ENCODE measurements at regions of chr15 and their contacts with region 1.

Region 1: GRCh38 chr15:64162870-64163658 is at the start of gene PPIB:
- DNase-seq: peak; percentile 89 to 97 (median 94)
- ATAC-seq: peak; percentile 94 to 95
- H3K4me3 Mint-ChIP-seq: peak within 1 kb of the TSS; percentile 83 to 99 (median 89)
- H3K27ac Mint-ChIP-seq: peak within 1 kb of the TSS; percentile 90 to 99 (median 94)
- H3K4me1 Mint-ChIP-seq: peaks cover 21 to 49% (median 40%) of the 10 kb centered on the region in 4 donors
- H3K27me3 Mint-ChIP-seq: no peaks in the 10 kb centered on the region
- polyA plus RNA-seq, gene PPIB: 431 to 581 (median 521) TPM

Region 2: GRCh38 chr15:64093627-64094417 is 69.2 kb before region 1 on chr15 and contains the start of gene CIAO2A:
- POLR2A ChIA-PET with region 1: interaction called, 27 read pairs
- DNase-seq: peak; percentile 69 to 95 (median 88)
- ATAC-seq: peak; percentile 69 to 72
- H3K4me3 Mint-ChIP-seq: peak within 1 kb of the TSS; percentile 93 to 100 (median 97)
- H3K27ac Mint-ChIP-seq: peak within 1 kb of the TSS; percentile 94 to 100 (median 100)
- H3K4me1 Mint-ChIP-seq: peaks cover 42 to 89% (median 80%) of the 10 kb centered on the region in 4 donors
- H3K27me3 Mint-ChIP-seq: no peaks in the 10 kb centered on the region
- polyA plus RNA-seq, gene CIAO2A: 54.8 to 84.8 (median 64.9) TPM

Region 3: DNA sequence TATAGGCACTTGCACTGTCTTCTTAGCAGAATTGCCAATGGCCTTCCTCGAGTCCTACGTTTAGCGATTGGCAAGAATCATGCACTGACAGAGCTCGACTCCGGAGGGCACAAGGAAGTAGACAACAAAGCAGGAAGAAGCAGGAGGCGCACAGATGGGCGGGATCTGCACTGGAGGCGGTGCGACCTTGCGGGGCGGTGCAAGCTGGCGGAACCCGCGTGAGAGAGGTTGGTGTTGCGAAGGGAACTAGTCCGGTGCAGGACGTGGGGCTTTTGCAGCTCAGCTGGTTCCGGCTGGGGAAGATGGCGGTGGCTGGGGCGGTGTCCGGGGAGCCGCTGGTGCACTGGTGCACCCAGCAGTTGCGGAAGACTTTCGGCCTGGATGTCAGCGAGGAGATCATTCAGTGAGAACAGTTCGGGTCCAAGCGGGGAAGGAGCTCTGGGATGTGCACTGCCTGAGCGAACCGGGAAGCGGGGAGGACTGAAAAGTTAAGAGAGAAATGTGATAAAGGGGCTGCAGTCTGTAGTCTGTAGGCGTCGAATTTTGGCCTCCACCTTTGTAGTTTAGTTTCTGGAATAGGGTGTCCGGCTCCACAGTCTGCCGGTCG is 224.6 kb after region 1 on chr15 and contains the start of gene TRIP4:
- POLR2A ChIA-PET with region 1: interaction called, 32 read pairs
- DNase-seq: peak; percentile 88 to 97 (median 96)
- ATAC-seq: peak; percentile 98 to 99
- H3K4me3 Mint-ChIP-seq: peak within 1 kb of the TSS; percentile 89 to 100 (median 99)
- H3K27ac Mint-ChIP-seq: peak within 1 kb of the TSS; percentile 93 to 97 (median 95)
- H3K4me1 Mint-ChIP-seq: peaks cover 11 to 22% (median 20%) of the 10 kb centered on the region in 4 donors
- H3K27me3 Mint-ChIP-seq: no peaks in the 10 kb centered on the region
- polyA plus RNA-seq, gene TRIP4: 19.7 to 24.3 (median 24.2) TPM